Heart left ventricle (tissue), 16 donors: ENCODE measurements at regions of chr14 and their contacts with region 1.

Region 1: GRCh38 chr14:91114079-91115065 is 499 bp downstream of the DGLUCY start:
- DNase-seq: peak in 3 of 5 donors; percentile 40 to 63 (median 56)
- ATAC-seq: peak; percentile 76 to 85 (median 83)
- H3K4me3 ChIP-seq: peak overlapping the region; percentile 55 to 92 (median 74)
- H3K27ac ChIP-seq: peak overlapping the region; percentile 92 to 99 (median 96)
- H3K4me1 ChIP-seq: peaks cover 5 to 61% (median 37%) of the 10 kb centered on the region in 12 donors
- H3K27me3 ChIP-seq: no peaks in the 10 kb centered on the region
- CTCF ChIP-seq: no peak
- POLR2A ChIP-seq: peak in 1 of 2 donors; percentile 73

Region 2: DNA sequence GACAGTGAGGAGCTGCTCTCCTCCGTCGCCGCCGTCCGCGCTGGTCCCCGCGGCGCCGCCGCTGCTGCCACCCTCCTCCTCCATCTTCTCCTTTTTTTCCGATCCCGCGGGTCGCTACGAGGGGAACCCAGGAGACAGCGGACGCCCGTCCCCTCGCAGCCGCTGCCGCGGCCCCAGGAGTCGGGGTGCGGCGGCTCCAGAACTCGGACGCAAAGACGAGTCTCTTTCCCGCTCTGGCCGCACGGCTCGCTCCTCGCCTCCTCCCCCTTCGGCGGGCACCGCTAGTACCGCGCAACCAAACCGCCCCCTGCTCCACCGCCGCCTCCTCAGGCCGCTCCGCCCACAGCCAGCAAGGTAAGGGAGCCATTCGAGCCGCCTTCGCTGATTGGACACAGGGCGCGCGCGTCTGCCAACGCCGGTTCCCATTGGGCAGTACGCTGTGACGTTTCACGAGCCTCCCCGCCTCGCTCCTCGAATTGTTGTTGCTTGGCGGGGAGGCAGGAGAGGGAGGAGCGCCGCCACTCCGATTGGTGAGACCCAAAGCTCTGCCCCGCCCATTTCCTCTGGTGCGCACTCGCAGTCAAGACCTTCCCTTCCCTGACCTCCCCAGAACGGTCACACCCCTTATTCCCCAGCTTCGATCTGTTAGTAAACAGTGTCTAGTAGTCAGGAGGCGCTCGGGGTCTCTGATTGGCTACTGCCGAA is 53.9 kb before region 1 on chr14 and contains the start of gene RPS6KA5:
- intact Hi-C with region 1: loop called in 3 of 10 experiments (anchors 1 to 2 kb)
- DNase-seq: peak; percentile 100
- ATAC-seq: peak; percentile 97 to 98 (median 98)
- H3K4me3 ChIP-seq: peak within 1 kb of the TSS; percentile 68 to 98 (median 94)
- H3K27ac ChIP-seq: peak within 1 kb of the TSS; percentile 84 to 99 (median 95)
- H3K4me1 ChIP-seq: peaks cover 0 to 32% (median 6%) of the 10 kb centered on the region in 12 donors
- H3K27me3 ChIP-seq: no peaks in the 10 kb centered on the region
- CTCF ChIP-seq: peak in 7 of 12 donors; percentile 3 to 37 (median 24)
- POLR2A ChIP-seq: peak in 1 of 2 donors; percentile 84
- total RNA-seq, gene RPS6KA5: 6.5 to 13.3 (median 8.7) TPM

Region 3: GRCh38 chr14:91138511-91139359 is 24.4 kb after region 1 on chr14:
- intact Hi-C with region 1: loop called in 1 of 10 experiments (anchors 2 kb)
- DNase-seq: no peak
- ATAC-seq: no peak
- H3K4me3 ChIP-seq: no peak overlapping the region
- H3K27ac ChIP-seq: peak overlapping the region in 1 of 12 donors; percentile 2
- H3K4me1 ChIP-seq: peaks cover 0 to 55% (median 17%) of the 10 kb centered on the region in 12 donors
- H3K27me3 ChIP-seq: no peaks in the 10 kb centered on the region
- CTCF ChIP-seq: peak; percentile 32 to 57 (median 40)
- POLR2A ChIP-seq: no peak

Region 4: DNA sequence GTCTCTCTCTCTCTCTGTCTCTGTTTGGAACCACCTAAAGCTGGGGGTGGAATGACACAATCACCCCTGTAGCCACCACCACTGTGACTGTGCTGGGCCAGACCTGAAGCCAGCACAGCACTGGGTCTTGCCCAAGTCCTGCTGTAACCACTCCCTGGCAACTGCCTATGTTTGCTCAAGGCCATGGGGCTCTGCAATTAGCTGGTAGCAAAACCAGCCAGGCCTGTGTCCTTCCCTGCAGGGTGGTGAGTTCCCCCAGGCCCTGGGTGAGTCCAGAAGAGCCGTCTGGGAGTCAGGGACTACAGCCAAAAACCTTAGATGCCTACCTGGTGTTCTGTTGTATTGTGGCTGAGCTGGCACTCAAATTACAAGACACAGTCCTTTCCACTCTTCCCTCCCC is 50.3 kb after region 1 on chr14:
- intact Hi-C with region 1: loop called in 1 of 10 experiments (anchors 5 kb)
- DNase-seq: peak in 4 of 5 donors; percentile 48 to 84 (median 72)
- ATAC-seq: peak; percentile 72 to 82 (median 80)
- H3K4me3 ChIP-seq: no peak overlapping the region
- H3K27ac ChIP-seq: peak overlapping the region in 9 of 12 donors; percentile 1 to 77 (median 53)
- H3K4me1 ChIP-seq: peaks cover 0 to 52% (median 11%) of the 10 kb centered on the region in 12 donors
- H3K27me3 ChIP-seq: no peaks in the 10 kb centered on the region
- CTCF ChIP-seq: no peak
- POLR2A ChIP-seq: no peak

Region 5: GRCh38 chr14:91170504-91171121 is 56.2 kb after region 1 on chr14:
- intact Hi-C with region 1: loop called in 1 of 10 experiments (anchors 2 kb)
- DNase-seq: peak in 3 of 5 donors; percentile 23 to 61 (median 58)
- ATAC-seq: peak; percentile 20 to 44 (median 30)
- H3K4me3 ChIP-seq: no peak overlapping the region
- H3K27ac ChIP-seq: peak overlapping the region; percentile 22 to 79 (median 60)
- H3K4me1 ChIP-seq: peaks cover 0 to 55% (median 19%) of the 10 kb centered on the region in 12 donors
- H3K27me3 ChIP-seq: no peaks in the 10 kb centered on the region
- CTCF ChIP-seq: no peak
- POLR2A ChIP-seq: no peak

Region 6: DNA sequence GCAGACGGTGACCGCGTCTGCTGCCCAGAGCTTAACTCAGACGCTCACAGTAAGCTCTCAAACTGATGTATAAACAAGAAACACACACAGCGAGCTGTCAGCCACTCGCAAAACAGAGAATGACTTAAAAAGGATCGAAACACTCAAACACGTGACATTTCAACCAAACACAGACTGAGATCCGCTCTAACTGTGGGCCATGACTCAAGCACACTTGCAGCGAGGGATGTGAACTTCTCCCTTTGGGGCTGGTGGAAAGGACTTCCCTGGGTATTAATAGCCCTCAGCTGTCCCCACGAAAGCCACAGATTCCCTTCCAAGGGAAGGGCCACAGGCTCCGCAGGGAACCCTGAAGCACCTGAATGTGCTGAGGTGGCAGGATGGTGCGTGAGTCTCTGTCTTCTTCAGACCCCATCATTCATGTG is 274.2 kb after region 1 on chr14:
- intact Hi-C with region 1: no loop called
- DNase-seq: no peak
- ATAC-seq: peak in 2 of 4 donors; percentile 44 to 56
- H3K4me3 ChIP-seq: no peak overlapping the region
- H3K27ac ChIP-seq: no peak overlapping the region
- H3K4me1 ChIP-seq: peaks cover 0 to 72% (median 8%) of the 10 kb centered on the region in 12 donors
- H3K27me3 ChIP-seq: peaks cover 0 to 11% (median 0%) of the 10 kb centered on the region in 9 donors
- CTCF ChIP-seq: no peak
- POLR2A ChIP-seq: no peak